GM13977 (cell line): ENCODE measurements at regions of chr4 and their contacts with region 1.

Region 1: DNA sequence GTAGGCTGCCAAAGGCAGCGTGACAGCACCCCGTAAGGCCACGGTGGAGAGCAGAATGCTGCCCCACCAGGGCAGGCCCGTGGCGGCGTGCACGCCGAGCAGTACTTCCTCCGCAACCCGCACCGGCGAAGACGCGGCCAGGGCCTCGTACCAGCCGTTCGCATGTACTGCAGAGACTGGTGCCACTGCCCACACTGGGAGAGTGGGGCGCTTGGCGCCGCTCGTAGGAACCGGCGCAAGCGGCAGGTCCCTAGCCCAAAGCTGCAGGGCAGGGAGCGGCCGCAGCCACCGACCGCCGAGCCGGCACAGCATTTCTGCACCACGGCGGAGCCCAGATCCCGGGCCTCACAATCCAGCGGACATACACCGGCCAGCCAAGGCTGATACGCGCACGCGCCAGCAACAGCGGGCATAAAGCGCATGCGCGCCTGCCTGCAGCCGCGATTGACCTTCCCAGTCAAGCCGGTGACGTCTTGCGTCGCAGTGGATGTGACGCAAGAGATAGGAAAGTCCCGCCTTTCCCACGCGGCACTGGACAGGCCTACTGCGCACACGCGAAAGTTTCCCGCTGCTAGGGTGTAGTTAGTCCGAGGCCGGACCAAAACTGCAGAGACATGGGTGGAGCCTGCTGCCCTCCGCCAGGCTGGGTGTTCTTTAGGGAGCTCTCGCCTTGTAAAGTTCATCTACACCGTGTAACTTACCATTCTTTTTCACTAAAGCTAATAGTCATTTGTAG is at the start of gene COX18:
- DNase-seq: peak; percentile 89
- CTCF ChIP-seq: no peak

Region 2: DNA sequence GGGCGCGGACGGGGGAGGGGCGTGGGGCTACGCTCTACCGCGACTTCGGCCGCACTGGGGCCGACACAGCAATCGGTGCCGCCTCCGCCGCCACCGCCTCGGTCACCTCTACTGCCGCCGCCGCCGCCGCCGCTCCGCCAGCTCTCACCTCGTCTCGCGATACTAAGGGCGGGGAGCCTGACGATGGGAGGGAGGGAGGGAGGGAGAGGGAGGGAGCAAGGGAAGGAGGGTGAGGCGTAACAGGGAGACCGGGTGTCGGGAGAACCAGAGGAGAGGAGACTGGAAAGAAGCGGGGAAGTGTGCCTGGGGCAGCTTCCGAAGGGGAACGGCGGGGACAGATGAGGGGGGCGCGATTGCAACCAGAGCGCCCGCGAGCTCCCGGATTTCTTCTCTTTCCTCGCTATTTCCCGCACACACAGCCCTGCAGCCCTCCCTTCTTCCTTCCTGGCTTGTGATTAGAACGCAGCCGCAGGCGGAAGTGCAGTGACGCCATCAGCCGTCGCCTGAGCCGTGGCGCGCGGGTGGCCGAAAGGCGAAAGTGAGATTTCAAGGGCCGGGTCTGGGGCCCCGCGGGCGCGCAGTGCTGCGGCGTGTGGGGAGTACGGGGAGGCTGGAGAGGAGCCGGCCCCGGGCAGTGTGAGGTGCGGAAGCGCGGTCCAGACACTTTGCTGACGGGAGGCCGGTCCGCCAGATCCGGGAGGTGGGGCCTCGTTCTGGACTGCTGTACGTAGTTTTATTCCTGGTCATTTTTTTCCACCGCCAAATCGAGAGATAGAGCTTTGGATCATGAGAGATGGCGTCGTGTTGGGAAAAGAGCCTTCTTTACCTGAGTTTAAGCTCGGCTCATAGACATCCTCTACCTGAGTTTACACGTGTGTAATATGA is 189.4 kb after region 1 on chr4 and contains the start of gene ANKRD17:
- in situ Hi-C with region 1: loop called (anchors 25 kb)
- DNase-seq: peak; percentile 89
- CTCF ChIP-seq: no peak

Region 3: DNA sequence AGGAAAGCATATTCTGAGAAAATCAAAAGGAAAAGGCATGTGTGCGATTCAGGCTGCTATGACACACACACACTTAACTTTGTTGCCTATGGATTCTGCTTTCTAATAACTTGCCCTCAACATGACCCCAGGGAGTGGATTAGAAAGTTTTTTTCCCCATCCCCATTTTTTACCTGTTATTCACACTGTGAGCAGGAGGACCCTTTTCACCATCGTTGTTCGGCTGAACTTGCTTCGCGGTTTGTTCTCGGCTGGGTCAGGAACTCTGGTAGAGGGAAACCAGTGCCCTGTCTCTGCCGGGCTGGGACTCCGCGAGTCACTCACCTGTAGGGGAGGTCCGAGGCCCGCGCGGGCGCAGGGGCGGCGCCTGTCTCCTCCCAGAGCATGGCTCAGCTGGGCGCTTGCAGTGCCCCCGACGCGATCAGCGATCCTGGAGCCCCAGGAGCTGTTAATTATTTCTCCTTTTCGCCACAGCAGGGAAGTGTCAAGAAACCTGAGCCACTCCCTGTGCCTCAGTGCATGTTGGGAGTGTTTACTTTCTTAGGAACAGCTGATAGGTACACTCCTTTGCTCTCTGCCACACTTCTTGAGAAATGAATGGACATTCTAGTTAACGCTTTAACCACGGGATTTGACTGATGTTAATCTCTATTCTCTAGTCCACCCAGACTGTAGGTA is 550.7 kb after region 1 on chr4 and contains the start of gene RASSF6:
- in situ Hi-C with region 1: loop called (anchors 25 kb)
- DNase-seq: peak; percentile 24
- CTCF ChIP-seq: no peak